Activated CD4-positive, alpha-beta memory T cell treated with anti-CD3 and anti-CD28 coated beads for 36 hours (primary cell): ENCODE measurements at regions of chr7 and their contacts with region 1.

Region 1: DNA sequence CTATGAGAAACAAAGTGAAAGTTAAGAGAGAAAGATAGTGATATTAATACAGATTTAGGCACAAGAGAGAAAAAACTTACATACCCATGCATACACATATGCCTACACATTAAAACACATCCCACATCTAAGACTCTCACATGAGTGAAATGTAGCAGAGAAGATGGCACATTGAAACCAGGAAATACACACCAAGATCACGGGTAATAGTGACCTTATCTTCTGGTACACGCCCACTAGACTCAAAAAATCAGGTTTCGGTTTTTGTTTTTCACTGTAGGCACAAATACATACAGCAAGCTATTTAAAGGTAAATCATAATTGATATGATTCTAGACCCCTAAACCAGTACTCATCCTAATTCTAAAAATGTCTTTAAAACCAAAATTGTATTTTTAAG is 225.2 kb upstream of the TAC1 start:
- DNase-seq: no peak
- H3K4me3 Mint-ChIP-seq: no peak overlapping the region
- H3K27ac Mint-ChIP-seq: no peak overlapping the region
- H3K4me1 Mint-ChIP-seq: no peaks in the 10 kb centered on the region
- H3K27me3 Mint-ChIP-seq: no peaks in the 10 kb centered on the region

Region 2: DNA sequence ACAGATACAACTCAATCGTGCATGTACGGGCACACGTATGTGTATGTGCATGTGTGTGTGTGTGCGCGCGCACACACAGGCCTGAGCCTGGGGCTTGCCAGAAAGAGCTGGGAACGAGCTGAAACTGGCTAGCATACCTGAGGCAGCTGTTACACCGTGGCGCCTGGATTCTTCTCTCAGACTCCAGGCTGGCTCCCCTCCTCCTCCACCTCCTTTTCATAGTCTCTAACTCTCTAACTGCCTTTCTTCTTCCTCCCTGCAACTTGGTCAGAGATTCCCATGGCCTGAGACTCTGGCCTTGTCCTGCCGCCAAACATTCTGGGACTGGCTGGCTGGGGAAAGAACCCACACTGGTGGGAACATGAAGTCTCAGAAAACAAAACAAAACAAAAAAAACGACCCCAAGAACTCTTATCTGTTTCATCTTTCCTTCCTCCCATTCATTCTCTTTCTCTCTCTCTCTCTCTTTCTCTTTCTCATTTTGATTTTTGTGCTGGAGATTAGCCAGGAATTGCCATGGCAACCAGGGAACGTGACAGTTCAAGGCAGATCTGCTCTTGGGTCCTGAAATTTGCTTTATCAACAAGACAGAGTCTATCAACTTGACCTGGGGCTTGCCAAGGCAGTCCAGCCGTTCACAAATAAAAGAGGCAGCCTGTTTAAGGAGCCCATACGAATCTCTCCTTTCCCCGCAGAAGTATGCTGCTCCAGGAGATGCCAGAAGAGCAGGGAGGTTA is 720.3 kb before region 1 on chr7:
- CTCF ChIA-PET with region 1: no interaction called
- POLR2A ChIA-PET with region 1: no interaction called
- intact Hi-C with region 1: no loop called
- DNase-seq: no peak
- H3K4me3 Mint-ChIP-seq: no peak overlapping the region
- H3K27ac Mint-ChIP-seq: no peak overlapping the region
- H3K4me1 Mint-ChIP-seq: no peaks in the 10 kb centered on the region
- H3K27me3 Mint-ChIP-seq: no peaks in the 10 kb centered on the region

Region 3: GRCh38 chr7:97460433-97460832 is 46.3 kb before region 1 on chr7:
- CTCF ChIA-PET with region 1: no interaction called
- POLR2A ChIA-PET with region 1: no interaction called
- intact Hi-C with region 1: loop called (anchors 1 kb)
- DNase-seq: no peak
- H3K4me3 Mint-ChIP-seq: no peak overlapping the region
- H3K27ac Mint-ChIP-seq: no peak overlapping the region
- H3K4me1 Mint-ChIP-seq: no peaks in the 10 kb centered on the region
- H3K27me3 Mint-ChIP-seq: no peaks in the 10 kb centered on the region

Region 4: DNA sequence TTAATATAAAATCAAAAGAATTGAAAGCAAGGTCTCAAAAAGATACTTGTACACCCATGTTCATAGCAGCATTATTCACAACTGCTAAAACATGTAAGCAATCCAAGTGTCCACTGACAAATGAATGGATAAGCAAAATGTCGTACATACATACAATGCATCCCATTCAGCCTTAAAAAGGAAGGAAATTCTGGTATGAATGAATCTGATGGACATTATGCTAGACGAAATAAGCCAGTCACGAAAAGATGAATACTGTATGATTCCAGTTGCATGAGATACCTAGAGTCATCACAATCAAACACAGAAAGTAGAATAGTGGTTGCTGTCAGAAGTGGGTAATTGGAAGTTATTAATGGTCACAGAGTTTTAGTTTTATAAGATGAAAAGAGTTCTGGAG is 215.7 kb after region 1 on chr7:
- CTCF ChIA-PET with region 1: no interaction called
- POLR2A ChIA-PET with region 1: no interaction called
- intact Hi-C with region 1: no loop called
- DNase-seq: no peak
- H3K4me3 Mint-ChIP-seq: no peak overlapping the region
- H3K27ac Mint-ChIP-seq: no peak overlapping the region
- H3K4me1 Mint-ChIP-seq: no peaks in the 10 kb centered on the region
- H3K27me3 Mint-ChIP-seq: peaks cover 3% of the 10 kb centered on the region